H1 (cell line): ENCODE measurements at regions of chr20 and their contacts with region 1.

Region 1: GRCh38 chr20:44747166-44748004 is 1.7 kb downstream of the KCNK15 start:
- DNase-seq: peak; percentile 83 to 95
- H3K4me3 ChIP-seq: no peak overlapping the region
- H3K27ac ChIP-seq: no peak overlapping the region
- H3K4me1 ChIP-seq: peaks cover 0 to 10% (median 3%) of the 10 kb centered on the region in 4 experiments; a peak in 5 of 7 replicates
- H3K27me3 ChIP-seq: peaks cover 2 to 39% (median 25%) of the 10 kb centered on the region in 4 experiments
- CTCF ChIP-seq: peak; percentile 73 to 88 (median 84)
- EP300 ChIP-seq: no peak
- POLR2A ChIP-seq: no peak
- RAD21 ChIP-seq: peak; percentile 83 to 84

Region 2: DNA sequence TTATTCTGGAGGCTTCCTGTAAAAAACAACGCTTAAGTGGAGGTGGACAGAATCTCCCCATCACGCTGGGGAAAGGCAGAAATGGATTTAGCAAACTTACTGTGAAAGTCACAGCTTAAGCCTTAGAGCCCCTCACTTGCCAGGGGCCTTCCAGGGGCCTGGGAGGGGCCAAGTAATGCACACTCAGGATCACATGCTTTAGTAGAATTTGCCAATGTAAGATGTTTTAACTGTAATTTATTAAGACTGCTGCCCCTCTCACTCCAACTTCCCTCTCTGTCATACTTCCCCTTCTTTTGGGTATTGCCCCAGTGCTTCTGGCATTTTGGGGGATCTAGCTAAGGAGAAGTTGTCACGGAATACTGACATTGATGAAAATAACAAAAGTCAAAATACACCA is 83.3 kb before region 1 on chr20:
- CTCF ChIA-PET with region 1: no interaction called
- POLR2A ChIA-PET with region 1: no interaction called
- DNase-seq: no peak
- H3K4me3 ChIP-seq: no peak overlapping the region
- H3K27ac ChIP-seq: no peak overlapping the region
- H3K4me1 ChIP-seq: 0 out of 7 replicates have a peak, but pooled peaks cover 0 to 3% (median 0%) of the 10 kb centered on the region in 4 experiments
- H3K27me3 ChIP-seq: no peaks in the 10 kb centered on the region; a peak in 1 of 7 replicates
- CTCF ChIP-seq: no peak
- EP300 ChIP-seq: no peak
- POLR2A ChIP-seq: no peak
- RAD21 ChIP-seq: no peak

Region 3: DNA sequence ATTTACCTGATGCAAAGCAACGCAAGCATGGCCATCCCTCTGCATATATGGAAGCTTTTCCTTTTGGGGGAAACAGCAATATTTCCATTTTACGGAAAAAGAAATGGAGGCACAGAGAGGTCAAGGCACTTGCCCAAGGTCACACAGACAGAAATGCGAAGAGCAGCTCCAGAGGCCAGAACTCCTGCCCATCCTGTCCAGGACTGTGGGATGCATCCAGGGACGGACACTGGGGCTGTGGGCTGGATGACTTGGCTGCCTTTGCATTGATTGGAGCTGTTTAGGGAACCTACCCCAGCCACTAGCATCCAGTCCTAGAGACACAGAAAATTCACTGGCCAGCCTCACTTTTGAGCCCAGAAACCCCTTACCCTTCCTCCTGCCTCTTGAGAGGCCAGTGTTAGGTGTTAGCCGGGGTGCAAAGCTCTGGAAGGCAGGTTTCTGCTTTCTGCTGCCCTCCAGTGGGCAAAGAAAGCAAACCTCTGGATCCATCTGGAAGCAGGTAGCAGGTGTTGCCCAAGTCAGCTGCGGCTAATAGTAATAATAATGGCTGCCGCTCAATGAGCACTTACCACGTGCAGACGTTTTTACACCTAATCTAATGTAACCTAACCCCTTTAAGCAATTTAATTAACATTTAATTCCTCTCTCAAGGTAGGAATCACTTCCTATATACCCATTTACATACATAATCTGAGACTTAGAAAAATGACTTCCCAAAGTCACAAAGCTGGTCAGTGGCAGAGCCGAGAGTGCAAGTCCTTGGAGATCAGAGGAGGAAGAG is 63.9 kb before region 1 on chr20:
- CTCF ChIA-PET with region 1: interaction called, 61 read pairs
- POLR2A ChIA-PET with region 1: interaction called, 3 read pairs
- DNase-seq: peak; percentile 70 to 83
- H3K4me3 ChIP-seq: no peak overlapping the region
- H3K27ac ChIP-seq: no peak overlapping the region
- H3K4me1 ChIP-seq: peaks cover 0 to 2% (median 0%) of the 10 kb centered on the region in 4 experiments; a peak in 1 of 7 replicates
- H3K27me3 ChIP-seq: peaks cover 0 to 2% (median 0%) of the 10 kb centered on the region in 4 experiments; a peak in 2 of 7 replicates
- CTCF ChIP-seq: peak; percentile 61 to 86 (median 81)
- EP300 ChIP-seq: no peak
- POLR2A ChIP-seq: no peak
- RAD21 ChIP-seq: peak; percentile 75 to 83

Region 4: DNA sequence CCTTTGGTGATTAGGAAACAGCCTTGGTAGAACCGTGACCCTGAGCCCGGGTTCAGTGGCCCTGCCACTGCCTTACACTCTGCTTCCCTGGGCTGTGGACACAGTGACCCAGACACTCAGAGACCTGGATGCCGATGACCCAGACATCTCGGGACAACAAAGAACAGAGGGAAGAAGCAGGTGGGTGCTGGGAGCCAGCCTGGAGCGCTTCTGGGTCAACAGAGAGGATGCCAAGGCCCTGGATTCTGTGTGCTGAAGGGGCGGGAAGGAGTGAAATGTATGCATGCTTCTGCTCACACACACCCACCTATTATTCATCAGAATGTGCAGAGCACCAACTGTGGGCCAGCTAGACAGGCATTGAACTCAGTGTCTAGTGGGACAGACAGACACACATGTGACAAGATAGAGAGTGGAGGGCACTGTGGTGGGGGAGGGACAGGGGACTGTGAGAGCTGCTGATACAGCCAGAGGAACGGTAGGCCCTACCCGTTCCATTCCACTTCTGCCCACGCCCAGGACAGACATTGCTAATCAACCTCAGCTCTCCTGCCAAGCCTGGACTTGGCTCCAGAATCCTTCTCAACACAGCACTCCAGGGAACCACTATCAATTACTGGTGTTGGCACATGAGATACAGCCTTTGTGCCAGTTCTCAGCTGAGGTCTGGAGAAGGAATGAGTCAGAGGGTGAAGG is 18.4 kb after region 1 on chr20:
- CTCF ChIA-PET with region 1: interaction called, 256 read pairs
- POLR2A ChIA-PET with region 1: interaction called, 4 read pairs
- DNase-seq: no peak
- H3K4me3 ChIP-seq: no peak overlapping the region
- H3K27ac ChIP-seq: no peak overlapping the region
- H3K4me1 ChIP-seq: peaks cover 0 to 5% (median 0%) of the 10 kb centered on the region in 4 experiments; a peak in 3 of 7 replicates
- H3K27me3 ChIP-seq: no peaks in the 10 kb centered on the region
- CTCF ChIP-seq: no peak
- EP300 ChIP-seq: no peak
- POLR2A ChIP-seq: no peak
- RAD21 ChIP-seq: no peak

Region 5: GRCh38 chr20:44785769-44786168 is 38.4 kb after region 1 on chr20:
- CTCF ChIA-PET with region 1: interaction called, 55 read pairs
- POLR2A ChIA-PET with region 1: no interaction called
- DNase-seq: peak; percentile 57 to 59
- H3K4me3 ChIP-seq: no peak overlapping the region
- H3K27ac ChIP-seq: no peak overlapping the region
- H3K4me1 ChIP-seq: peaks cover 12 to 19% (median 17%) of the 10 kb centered on the region in 4 experiments
- H3K27me3 ChIP-seq: no peaks in the 10 kb centered on the region
- CTCF ChIP-seq: peak; percentile 51 to 72 (median 65)
- EP300 ChIP-seq: no peak
- POLR2A ChIP-seq: no peak
- RAD21 ChIP-seq: peak; percentile 79 to 86

Region 6: DNA sequence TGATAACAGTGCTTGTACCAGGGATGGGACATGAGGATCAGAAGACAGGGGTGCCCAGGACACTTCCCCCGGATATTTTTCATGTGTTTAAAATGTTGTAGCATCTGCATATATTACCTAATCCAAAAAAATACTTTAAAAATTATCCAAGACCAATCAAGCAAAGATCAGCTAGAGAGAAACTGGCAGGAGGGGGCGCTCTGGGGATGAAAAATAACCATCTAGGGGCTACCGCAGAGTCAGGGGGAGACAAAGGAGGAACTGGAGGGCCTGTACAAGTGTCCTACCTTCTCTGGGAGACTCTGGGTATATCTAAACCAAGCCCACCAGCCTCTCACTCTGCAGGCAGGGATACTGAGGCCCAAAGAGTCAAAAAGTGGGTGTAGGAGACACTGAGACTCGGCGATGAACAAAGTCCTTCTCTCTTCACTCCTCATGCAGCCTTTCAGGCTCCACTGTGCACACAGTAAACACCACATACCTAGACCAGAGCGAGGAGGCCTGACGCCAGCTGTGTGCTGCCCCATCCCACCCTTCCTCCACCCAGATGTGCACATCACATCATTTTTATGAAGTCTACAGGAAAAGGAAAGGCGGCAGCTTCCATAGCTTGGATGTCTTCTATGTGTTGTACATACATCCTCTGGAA is 53.1 kb after region 1 on chr20:
- CTCF ChIA-PET with region 1: interaction called, 50 read pairs
- POLR2A ChIA-PET with region 1: interaction called, 3 read pairs
- DNase-seq: peak in 1 of 2 experiments; percentile 75
- H3K4me3 ChIP-seq: no peak overlapping the region
- H3K27ac ChIP-seq: no peak overlapping the region
- H3K4me1 ChIP-seq: peaks cover 5 to 9% (median 7%) of the 10 kb centered on the region in 4 experiments
- H3K27me3 ChIP-seq: no peaks in the 10 kb centered on the region
- CTCF ChIP-seq: peak in 2 of 3 experiments; percentile 45 to 67; a peak in 3 of 4 replicates
- EP300 ChIP-seq: no peak
- POLR2A ChIP-seq: no peak
- RAD21 ChIP-seq: peak; percentile 64 to 72

Region 7: DNA sequence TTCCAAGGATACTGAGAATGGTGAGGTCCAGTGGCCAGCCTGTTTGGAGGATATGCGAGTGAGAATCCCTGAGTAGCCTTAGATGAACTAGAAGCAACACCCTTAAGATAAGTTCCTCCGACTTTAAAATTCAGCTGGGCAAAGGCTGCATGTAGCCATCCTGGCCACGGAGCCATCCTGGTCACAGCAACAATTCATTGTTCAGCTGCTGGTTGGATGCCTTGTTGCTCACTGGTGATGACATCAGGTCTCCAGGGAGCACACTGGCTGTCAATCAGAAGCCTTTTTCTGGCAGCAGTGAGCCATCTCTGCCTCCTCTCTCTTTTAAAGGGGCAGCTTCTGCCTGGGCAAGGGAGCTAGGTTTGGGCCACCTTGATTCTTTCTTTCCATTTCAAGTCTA is 85.3 kb after region 1 on chr20:
- CTCF ChIA-PET with region 1: interaction called, 10 read pairs
- POLR2A ChIA-PET with region 1: interaction called, 5 read pairs
- DNase-seq: no peak
- H3K4me3 ChIP-seq: no peak overlapping the region
- H3K27ac ChIP-seq: no peak overlapping the region
- H3K4me1 ChIP-seq: peaks cover 0 to 3% (median 2%) of the 10 kb centered on the region in 4 experiments; a peak in 3 of 7 replicates
- H3K27me3 ChIP-seq: no peaks in the 10 kb centered on the region
- CTCF ChIP-seq: no peak
- EP300 ChIP-seq: no peak
- POLR2A ChIP-seq: no peak
- RAD21 ChIP-seq: no peak

Region 8: GRCh38 chr20:44866703-44867335 is 119.4 kb after region 1 on chr20:
- CTCF ChIA-PET with region 1: interaction called, 97 read pairs
- POLR2A ChIA-PET with region 1: no interaction called
- DNase-seq: no peak
- H3K4me3 ChIP-seq: no peak overlapping the region
- H3K27ac ChIP-seq: no peak overlapping the region
- H3K4me1 ChIP-seq: no peaks in the 10 kb centered on the region
- H3K27me3 ChIP-seq: no peaks in the 10 kb centered on the region
- CTCF ChIP-seq: no peak
- EP300 ChIP-seq: no peak
- POLR2A ChIP-seq: no peak
- RAD21 ChIP-seq: no peak